ENCODE measurements at regions of chr9 and their contacts with region 1.

Region 1: GRCh38 chr9:35526087-35526801 is 36.3 kb downstream of the RUSC2 start:
- DNase-seq: no peak
- H3K4me3 ChIP-seq: no peak overlapping the region
- H3K27me3 ChIP-seq: no peaks in the 10 kb centered on the region
- CTCF ChIP-seq: no peak

Region 2: DNA sequence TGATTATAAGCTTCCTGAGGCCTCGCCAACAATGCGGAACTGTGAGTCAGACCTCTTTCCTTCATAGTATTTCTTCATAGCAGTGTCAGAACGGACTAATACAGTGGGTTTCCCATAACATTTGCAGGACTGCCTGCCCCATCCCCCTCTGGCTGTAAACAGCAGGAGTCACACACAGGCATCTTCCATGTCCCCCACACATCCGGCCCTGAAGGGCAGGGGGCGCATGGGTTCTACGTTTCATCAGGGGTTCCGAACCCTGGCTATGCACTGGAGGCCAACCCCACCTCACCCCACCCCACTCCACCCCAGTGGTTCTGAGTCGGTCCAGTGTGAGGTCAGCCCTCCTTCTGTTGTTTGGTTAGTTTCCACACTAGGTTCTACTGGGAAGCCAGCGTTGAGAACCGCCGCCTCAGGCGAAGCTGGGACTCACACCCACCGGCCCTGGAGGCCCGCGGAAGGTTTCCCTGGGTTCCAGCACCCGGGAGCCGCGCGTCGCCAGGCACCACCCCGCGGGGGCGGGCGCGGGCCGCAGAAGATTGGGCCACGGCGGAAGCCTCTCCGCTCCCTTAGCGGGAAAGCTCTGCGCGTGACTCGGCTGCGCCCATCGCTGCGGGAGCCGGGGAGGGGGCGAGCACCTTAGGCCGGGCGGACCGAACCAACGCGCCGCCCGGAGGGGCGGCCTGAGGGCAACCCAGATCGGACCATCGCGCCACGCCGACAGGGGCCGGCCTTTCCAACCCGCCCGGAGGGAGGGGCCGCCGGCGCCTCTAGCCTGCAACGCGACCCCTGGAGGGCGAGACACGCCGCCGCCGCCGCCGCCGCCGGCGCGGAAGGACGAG is 36.7 kb before region 1 on chr9 and contains the start of gene RUSC2:
- CTCF ChIA-PET with region 1: interaction called, 11 read pairs
- POLR2A ChIA-PET with region 1: no interaction called
- DNase-seq: peak; percentile 60
- H3K4me3 ChIP-seq: peak within 1 kb of the TSS; percentile 96
- H3K27me3 ChIP-seq: no peaks in the 10 kb centered on the region
- CTCF ChIP-seq: peak; percentile 35
- polyA plus RNA-seq, gene RUSC2: 19.6 and 43.3 TPM in 2 replicates

Region 3: DNA sequence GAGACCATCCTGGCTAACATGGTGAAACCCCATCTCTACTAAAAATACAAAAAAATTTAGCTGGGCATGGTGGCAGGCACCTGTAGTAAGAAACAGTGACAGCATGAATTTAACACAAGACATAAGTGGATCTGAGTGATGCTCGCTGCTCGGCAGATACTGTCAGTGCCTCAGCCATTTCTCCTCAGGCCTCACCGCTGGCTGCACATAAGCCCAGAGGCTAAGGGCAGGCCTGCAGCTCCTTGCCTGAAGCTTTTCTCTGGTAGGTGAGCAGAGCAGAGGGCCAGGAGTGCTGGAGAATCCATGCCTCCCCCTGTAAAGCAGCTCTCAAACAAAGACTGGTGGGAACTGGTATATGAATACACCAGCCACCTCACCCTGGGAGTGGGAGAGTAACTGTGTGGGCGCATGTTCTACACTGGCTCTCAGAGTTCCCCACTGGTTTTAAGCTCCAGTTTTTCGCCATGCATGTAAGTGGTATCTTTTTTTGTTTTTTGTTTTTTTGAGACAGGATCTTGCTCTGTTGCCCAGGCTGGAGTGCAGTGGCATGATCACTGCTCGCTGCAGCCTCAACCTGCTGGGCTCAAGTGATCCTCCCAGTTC is 102.2 kb after region 1 on chr9:
- CTCF ChIA-PET with region 1: no interaction called
- POLR2A ChIA-PET with region 1: no interaction called
- DNase-seq: no peak
- H3K4me3 ChIP-seq: no peak overlapping the region
- H3K27me3 ChIP-seq: no peaks in the 10 kb centered on the region; the same call in 1 of the 2 replicates
- CTCF ChIP-seq: no peak